ENCODE measurements at regions of chr5 and their contacts with region 1.

Region 1: GRCh38 chr5:54480296-54480695 is 24.8 kb downstream of the HSPB3 start:
- DNase-seq: peak; percentile 23
- ATAC-seq: no peak
- H3K4me3 ChIP-seq: no peak overlapping the region
- H3K27ac ChIP-seq: no peak overlapping the region
- H3K4me1 ChIP-seq: no peaks in the 10 kb centered on the region
- H3K27me3 ChIP-seq: peaks cover 12% of the 10 kb centered on the region
- CTCF ChIP-seq: no peak
- POLR2A ChIP-seq: no peak
- RAD21 ChIP-seq: no peak

Region 2: DNA sequence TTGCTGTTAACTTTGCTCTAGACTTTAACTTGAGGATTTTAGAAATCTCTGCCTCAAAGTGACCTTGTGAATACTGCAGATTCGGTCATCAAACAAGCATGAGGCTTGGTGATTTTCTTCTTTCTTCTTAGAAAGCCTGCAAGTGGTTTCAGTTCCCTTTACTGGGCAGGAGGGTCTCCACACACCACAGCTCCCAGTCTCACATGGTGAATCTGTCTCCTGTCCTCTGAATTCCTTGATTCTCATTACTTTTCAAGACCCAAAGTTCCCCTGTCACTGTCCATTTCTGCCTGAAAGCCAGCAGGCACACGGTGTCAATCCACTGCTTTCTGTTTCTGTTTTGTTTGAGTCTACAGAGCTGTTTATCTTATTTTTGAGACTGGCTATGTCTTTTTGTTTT is 10.7 kb before region 1 on chr5:
- CTCF ChIA-PET with region 1: no interaction called
- POLR2A ChIA-PET with region 1: interaction called, 16 read pairs
- dilution Hi-C with region 1: no loop called
- in situ Hi-C with region 1: no loop called
- intact Hi-C with region 1: no loop called
- DNase-seq: peak; percentile 18
- ATAC-seq: peak; percentile 40
- H3K4me3 ChIP-seq: peak overlapping the region; percentile 44
- H3K27ac ChIP-seq: peak overlapping the region; percentile 94; the same call in 1 of the 2 replicates
- H3K4me1 ChIP-seq: peaks cover 4% of the 10 kb centered on the region; the same call in 1 of the 2 replicates
- H3K27me3 ChIP-seq: no peaks in the 10 kb centered on the region
- CTCF ChIP-seq: no peak
- POLR2A ChIP-seq: no peak
- RAD21 ChIP-seq: no peak

Region 3: GRCh38 chr5:55146543-55147151 is 666.4 kb after region 1 on chr5:
- CTCF ChIA-PET with region 1: no interaction called
- POLR2A ChIA-PET with region 1: no interaction called
- dilution Hi-C with region 1: no loop called
- in situ Hi-C with region 1: loop called (anchors 25 kb)
- intact Hi-C with region 1: no loop called
- DNase-seq: peak; percentile 82
- ATAC-seq: peak; percentile 97
- H3K4me3 ChIP-seq: no peak overlapping the region
- H3K27ac ChIP-seq: no peak overlapping the region
- H3K4me1 ChIP-seq: no peaks in the 10 kb centered on the region
- H3K27me3 ChIP-seq: peaks cover 11% of the 10 kb centered on the region
- CTCF ChIP-seq: peak; percentile 98
- POLR2A ChIP-seq: peak; percentile 56; the same call in 1 of the 2 replicates
- RAD21 ChIP-seq: peak; percentile 99

Measured in IMR-90 (cell line).